K562 (cell line): ENCODE measurements at regions of chr6 and their contacts with region 1.

Region 1: DNA sequence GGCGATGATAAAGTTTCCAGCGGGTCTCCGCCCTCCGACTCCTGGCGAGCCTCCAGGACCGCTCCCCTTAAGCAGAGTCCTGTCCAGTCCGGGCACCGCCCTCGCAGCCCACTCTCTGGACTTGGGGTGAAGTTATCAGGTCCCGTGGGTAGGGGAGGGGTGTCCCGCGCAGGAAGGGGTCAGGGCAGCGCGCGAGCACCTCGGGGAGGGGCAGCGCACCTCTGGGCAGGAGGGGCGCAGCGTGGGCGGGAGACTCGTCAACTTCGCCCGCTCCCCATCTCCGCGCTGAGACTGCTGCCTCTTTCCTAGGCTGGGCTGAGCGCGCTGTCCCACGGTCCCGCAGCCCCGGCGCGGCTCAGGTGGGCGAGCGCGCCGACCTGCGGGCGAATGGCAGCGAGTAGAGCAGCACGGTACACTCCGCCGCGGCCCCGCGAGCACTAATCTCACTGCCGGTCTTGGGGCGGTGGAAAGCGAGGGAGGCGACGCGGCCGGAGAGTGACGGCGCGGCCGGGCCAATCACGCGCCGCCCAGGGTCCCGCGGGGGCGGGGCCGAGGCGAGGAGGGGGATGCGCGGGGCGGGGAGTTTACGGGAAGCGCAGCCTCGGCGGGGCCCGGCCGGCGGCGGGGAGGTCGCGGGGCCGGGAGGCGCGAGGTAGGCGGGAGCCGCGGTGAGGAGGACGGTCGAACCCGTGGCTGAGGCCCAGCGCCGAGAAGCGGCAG is at the start of gene MAN1A1:
- DNase-seq: peak; percentile 96 to 99 (median 98)
- ATAC-seq: peak; percentile 86
- H3K4me3 ChIP-seq: peak within 1 kb of the TSS; percentile 77
- H3K27ac ChIP-seq: peak within 1 kb of the TSS; percentile 89
- H3K4me1 ChIP-seq: peaks cover 8 to 17% of the 10 kb centered on the region in 2 experiments; a peak in 2 of 5 replicates
- H3K27me3 ChIP-seq: no peaks in the 10 kb centered on the region
- CTCF ChIP-seq: peak in 2 of 3 experiments; percentile 28 to 47; a peak in 2 of 6 replicates
- EP300 ChIP-seq: no peak
- POLR2A ChIP-seq: peak; percentile 90
- RAD21 ChIP-seq: peak; percentile 40 to 42
- polyA plus RNA-seq, gene MAN1A1: 24.5 to 27.7 TPM

Region 2: GRCh38 chr6:118893807-118894424 is 455.6 kb before region 1 on chr6 and contains the start of gene ASF1A:
- CTCF ChIA-PET with region 1: no interaction called
- POLR2A ChIA-PET with region 1: no interaction called
- in situ Hi-C with region 1: no loop called
- intact Hi-C with region 1: loop called (anchors 5 kb)
- DNase-seq: peak; percentile 90 to 99 (median 91)
- ATAC-seq: peak; percentile 86
- H3K4me3 ChIP-seq: peak within 1 kb of the TSS; percentile 72
- H3K27ac ChIP-seq: peak within 1 kb of the TSS; percentile 93
- H3K4me1 ChIP-seq: peaks cover 20 to 40% of the 10 kb centered on the region in 2 experiments
- H3K27me3 ChIP-seq: no peaks in the 10 kb centered on the region
- CTCF ChIP-seq: peak; percentile 73 to 86 (median 83)
- EP300 ChIP-seq: peak; percentile 53
- POLR2A ChIP-seq: peak; percentile 90
- RAD21 ChIP-seq: peak in 1 of 2 experiments; percentile 52; a peak in 2 of 4 replicates
- polyA plus RNA-seq, gene ASF1A: 32.1 to 34.8 TPM

Region 3: DNA sequence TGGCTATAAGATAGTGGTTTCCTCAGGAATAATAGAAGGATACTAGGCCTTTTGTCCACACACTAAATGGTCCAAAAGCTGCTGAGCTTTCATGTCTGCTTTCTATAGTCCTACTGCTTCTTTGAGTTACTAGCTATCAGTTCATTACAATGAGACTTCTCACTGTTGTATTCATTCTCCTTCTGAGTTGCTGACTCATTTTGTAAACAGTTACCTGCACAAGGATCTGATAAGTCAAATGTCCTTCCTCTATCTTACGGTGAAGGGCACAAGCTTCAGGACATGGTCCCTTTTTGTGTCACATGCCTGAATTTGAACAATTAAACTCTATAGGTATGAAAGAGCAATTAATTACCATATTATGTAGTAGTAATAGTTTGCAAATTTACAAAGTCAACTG is 90.5 kb before region 1 on chr6:
- CTCF ChIA-PET with region 1: no interaction called
- POLR2A ChIA-PET with region 1: no interaction called
- in situ Hi-C with region 1: no loop called
- intact Hi-C with region 1: loop called (anchors 2 kb)
- DNase-seq: peak in 3 of 4 experiments; percentile 30 to 64 (median 32)
- ATAC-seq: peak; percentile 49
- H3K4me3 ChIP-seq: no peak overlapping the region
- H3K27ac ChIP-seq: peak overlapping the region; percentile 50
- H3K4me1 ChIP-seq: peaks cover 6 to 44% of the 10 kb centered on the region in 2 experiments
- H3K27me3 ChIP-seq: no peaks in the 10 kb centered on the region
- CTCF ChIP-seq: no peak
- EP300 ChIP-seq: peak; percentile 83
- POLR2A ChIP-seq: no peak
- RAD21 ChIP-seq: no peak

Region 4: GRCh38 chr6:119327810-119328209 is 21.7 kb before region 1 on chr6:
- CTCF ChIA-PET with region 1: no interaction called
- POLR2A ChIA-PET with region 1: no interaction called
- in situ Hi-C with region 1: no loop called
- intact Hi-C with region 1: no loop called
- DNase-seq: no peak
- ATAC-seq: no peak
- H3K4me3 ChIP-seq: no peak overlapping the region
- H3K27ac ChIP-seq: no peak overlapping the region
- H3K4me1 ChIP-seq: peaks cover 13 to 60% of the 10 kb centered on the region in 2 experiments
- H3K27me3 ChIP-seq: no peaks in the 10 kb centered on the region
- CTCF ChIP-seq: no peak
- EP300 ChIP-seq: no peak
- POLR2A ChIP-seq: no peak
- RAD21 ChIP-seq: no peak

Region 5: DNA sequence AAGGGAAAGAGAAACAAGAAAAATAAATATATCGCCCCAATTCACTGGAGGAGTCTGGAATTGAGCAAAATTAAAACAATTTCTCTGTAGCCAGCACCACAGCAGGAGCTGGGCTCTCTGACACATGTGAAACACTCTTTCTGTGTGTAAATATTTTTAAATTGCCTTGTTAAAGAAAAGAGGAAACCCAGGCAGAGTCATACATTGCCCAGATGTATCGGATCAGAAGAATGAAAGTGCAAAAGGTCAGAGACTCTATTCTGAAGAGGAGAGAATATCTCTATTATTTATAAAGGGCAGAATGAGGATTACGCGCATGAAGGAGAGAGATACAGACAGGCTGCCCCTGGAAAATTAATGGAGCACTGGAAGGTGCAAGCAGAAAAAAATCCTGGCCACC is 127.1 kb after region 1 on chr6:
- CTCF ChIA-PET with region 1: no interaction called
- POLR2A ChIA-PET with region 1: interaction called, 4 read pairs
- in situ Hi-C with region 1: no loop called
- intact Hi-C with region 1: loop called (anchors 10 kb)
- DNase-seq: no peak
- ATAC-seq: peak; percentile 7; the same call in 2 of the 3 replicates
- H3K4me3 ChIP-seq: no peak overlapping the region
- H3K27ac ChIP-seq: peak overlapping the region; percentile 13; the same call in 1 of the 3 replicates
- H3K4me1 ChIP-seq: peaks cover 4 to 21% of the 10 kb centered on the region in 2 experiments; a peak in 3 of 5 replicates
- H3K27me3 ChIP-seq: no peaks in the 10 kb centered on the region
- CTCF ChIP-seq: no peak
- EP300 ChIP-seq: no peak
- POLR2A ChIP-seq: no peak
- RAD21 ChIP-seq: no peak

Region 6: DNA sequence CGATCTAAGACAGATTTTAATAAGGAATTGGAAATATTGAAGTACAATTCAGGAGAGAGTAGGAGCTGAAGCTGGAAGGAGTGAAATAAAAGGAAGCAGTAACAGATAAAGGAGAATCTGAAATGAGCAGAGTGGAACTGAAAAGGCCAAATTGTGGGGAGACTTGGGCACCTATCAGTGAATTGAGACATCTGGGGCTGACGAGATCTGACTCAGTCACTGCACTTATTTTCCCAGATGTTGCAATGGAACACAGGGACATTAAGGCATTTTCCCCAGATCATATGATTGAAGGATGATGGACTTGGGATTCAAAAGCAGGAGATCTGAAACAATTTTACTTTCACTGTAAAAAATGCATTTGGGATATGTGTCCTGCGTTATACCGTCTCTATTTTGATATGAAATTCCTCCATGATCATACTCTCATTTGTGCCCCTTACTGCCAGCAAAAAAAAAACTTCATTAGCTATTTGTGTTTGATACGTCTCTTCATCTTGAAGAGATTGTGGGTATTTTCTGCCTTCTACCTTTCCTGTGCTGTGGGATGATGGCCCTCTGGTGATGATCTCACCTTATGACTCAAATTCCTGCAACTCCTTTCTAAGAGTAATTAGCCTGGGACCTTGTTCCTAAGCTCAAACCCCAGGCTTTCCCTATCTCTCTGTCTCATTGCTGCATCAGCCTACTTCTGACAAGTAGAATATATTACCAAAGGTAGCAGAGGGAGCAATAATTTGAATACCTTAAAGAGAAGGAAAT is 278.6 kb after region 1 on chr6:
- CTCF ChIA-PET with region 1: no interaction called
- POLR2A ChIA-PET with region 1: interaction called, 3 read pairs
- in situ Hi-C with region 1: no loop called
- intact Hi-C with region 1: loop called (anchors 1 kb)
- DNase-seq: peak; percentile 58 to 84 (median 63)
- ATAC-seq: peak; percentile 91
- H3K4me3 ChIP-seq: no peak overlapping the region
- H3K27ac ChIP-seq: peak overlapping the region; percentile 89
- H3K4me1 ChIP-seq: peaks cover 8 to 31% of the 10 kb centered on the region in 2 experiments; a peak in 3 of 5 replicates
- H3K27me3 ChIP-seq: no peaks in the 10 kb centered on the region
- CTCF ChIP-seq: peak in 1 of 3 experiments; percentile 27; a peak in 2 of 6 replicates
- EP300 ChIP-seq: peak; percentile 82
- POLR2A ChIP-seq: no peak
- RAD21 ChIP-seq: peak; percentile 41 to 66

Region 7: GRCh38 chr6:119865480-119866374 is 516.2 kb after region 1 on chr6:
- CTCF ChIA-PET with region 1: no interaction called
- POLR2A ChIA-PET with region 1: no interaction called
- in situ Hi-C with region 1: no loop called
- intact Hi-C with region 1: loop called (anchors 10 kb)
- DNase-seq: no peak
- ATAC-seq: no peak
- H3K4me3 ChIP-seq: no peak overlapping the region
- H3K27ac ChIP-seq: no peak overlapping the region
- H3K4me1 ChIP-seq: no peaks in the 10 kb centered on the region
- H3K27me3 ChIP-seq: no peaks in the 10 kb centered on the region
- CTCF ChIP-seq: no peak
- EP300 ChIP-seq: no peak
- POLR2A ChIP-seq: no peak
- RAD21 ChIP-seq: no peak